H1 (cell line): ENCODE measurements at regions of chr6 and their contacts with region 1.

Region 1: DNA sequence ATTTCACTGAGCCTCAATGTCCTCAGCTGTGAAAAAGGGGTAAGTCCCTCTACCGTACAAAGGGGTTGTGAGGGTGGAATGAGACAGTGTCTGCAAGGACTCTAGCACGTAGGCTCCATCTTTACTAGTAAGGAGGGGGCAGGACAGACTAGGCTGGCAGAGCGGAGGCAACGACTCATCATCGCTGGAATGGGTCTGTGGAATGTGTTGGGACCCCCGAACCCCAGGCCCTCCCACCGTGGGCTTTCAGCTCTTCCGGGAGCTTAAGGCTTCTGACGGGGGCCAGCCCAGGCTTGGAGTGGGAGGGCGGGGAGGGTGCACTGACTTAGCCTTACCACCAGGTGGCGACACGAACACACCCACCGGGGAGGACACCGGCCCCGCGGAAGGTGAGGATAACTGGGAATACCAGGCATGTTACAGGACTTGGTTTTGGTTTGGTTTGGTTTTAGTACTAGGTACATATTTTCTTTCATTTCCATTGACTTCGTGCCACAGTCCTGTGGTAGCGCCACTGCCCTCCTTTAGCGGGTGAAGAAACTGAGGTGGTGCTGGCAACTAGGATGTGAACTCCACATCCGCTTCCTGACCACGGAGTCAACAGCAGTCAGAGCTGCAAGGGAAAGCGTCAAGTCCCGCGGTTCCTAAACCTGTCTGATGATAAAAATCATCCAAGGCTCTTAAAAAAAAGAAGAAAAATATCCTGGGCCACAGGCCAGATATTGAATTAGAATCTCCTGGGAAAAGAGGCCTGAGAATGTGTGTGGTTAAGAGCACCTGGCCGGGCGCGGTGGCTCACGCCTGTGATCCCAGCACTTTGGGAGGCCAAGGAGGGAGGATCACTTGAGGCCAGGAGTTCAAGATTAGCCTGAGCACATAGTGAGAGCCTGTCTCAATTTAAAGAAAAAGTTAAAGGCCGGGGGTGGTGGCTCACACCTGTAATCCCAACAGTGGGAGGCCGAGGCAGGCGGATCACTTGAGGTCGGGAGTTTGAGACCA is 10.3 kb upstream of the TULP1 start:
- DNase-seq: peak; percentile 53 to 91
- H3K4me3 ChIP-seq: no peak overlapping the region
- H3K27ac ChIP-seq: no peak overlapping the region
- H3K4me1 ChIP-seq: peaks cover 0 to 13% (median 8%) of the 10 kb centered on the region in 4 experiments; a peak in 6 of 7 replicates
- H3K27me3 ChIP-seq: 0 out of 7 replicates have a peak, but pooled peaks cover 0 to 2% (median 0%) of the 10 kb centered on the region in 4 experiments
- CTCF ChIP-seq: peak; percentile 94 to 98 (median 94)
- EP300 ChIP-seq: no peak
- POLR2A ChIP-seq: no peak
- RAD21 ChIP-seq: peak; percentile 92 to 96

Region 2: GRCh38 chr6:35402136-35402855 is 120.7 kb before region 1 on chr6:
- CTCF ChIA-PET with region 1: no interaction called
- POLR2A ChIA-PET with region 1: no interaction called
- DNase-seq: no peak
- H3K4me3 ChIP-seq: no peak overlapping the region
- H3K27ac ChIP-seq: no peak overlapping the region
- H3K4me1 ChIP-seq: peaks cover 0 to 8% (median 0%) of the 10 kb centered on the region in 4 experiments; a peak in 2 of 7 replicates
- H3K27me3 ChIP-seq: no peaks in the 10 kb centered on the region
- CTCF ChIP-seq: no peak
- EP300 ChIP-seq: no peak
- POLR2A ChIP-seq: no peak
- RAD21 ChIP-seq: no peak

Region 3: DNA sequence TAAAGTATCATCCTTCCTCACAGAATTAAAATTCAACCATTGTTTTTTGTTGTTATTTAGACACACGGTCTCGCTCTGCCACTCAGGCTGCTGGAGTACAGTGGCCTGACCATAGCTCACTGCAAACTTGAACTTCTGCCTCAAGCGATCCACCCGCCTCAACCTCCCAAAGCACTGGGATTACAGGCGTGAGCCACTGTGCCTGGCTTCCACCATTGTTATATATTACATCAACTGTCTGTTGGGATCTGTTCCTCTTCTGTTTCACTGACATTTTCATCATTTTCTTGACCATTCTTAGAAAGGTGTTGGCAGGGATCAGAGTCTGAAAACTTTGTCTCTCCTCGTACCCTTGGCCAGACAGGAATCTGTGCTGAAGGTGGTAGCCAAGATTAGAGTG is 11.0 kb after region 1 on chr6:
- CTCF ChIA-PET with region 1: interaction called, 521 read pairs
- POLR2A ChIA-PET with region 1: interaction called, 6 read pairs
- DNase-seq: no peak
- H3K4me3 ChIP-seq: no peak overlapping the region
- H3K27ac ChIP-seq: no peak overlapping the region
- H3K4me1 ChIP-seq: peaks cover 2 to 9% (median 6%) of the 10 kb centered on the region in 4 experiments; a peak in 5 of 7 replicates
- H3K27me3 ChIP-seq: no peaks in the 10 kb centered on the region
- CTCF ChIP-seq: no peak
- EP300 ChIP-seq: no peak
- POLR2A ChIP-seq: no peak
- RAD21 ChIP-seq: no peak

Region 4: DNA sequence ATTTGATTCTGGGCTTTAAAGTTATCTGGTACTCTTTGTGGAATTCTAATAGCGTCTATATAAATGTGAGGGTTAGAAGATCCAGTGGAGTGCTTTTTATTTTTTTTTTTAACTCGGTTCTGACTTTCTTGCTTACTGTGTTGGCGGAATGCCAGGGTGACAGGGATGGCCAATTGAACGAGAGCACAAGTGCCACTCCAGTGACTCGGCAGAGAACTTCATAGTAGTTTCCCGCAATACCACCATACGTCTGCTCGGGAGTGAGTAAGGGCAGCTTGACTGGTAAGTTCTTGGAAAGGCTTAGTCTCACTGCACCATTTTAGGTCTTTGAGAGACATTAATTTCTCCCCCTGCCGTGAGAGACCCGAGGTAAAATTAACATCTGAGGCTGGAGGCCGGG is 39.1 kb after region 1 on chr6:
- CTCF ChIA-PET with region 1: interaction called, 521 read pairs
- POLR2A ChIA-PET with region 1: no interaction called
- DNase-seq: no peak
- H3K4me3 ChIP-seq: no peak overlapping the region
- H3K27ac ChIP-seq: no peak overlapping the region
- H3K4me1 ChIP-seq: peaks cover 0 to 4% (median 2%) of the 10 kb centered on the region in 4 experiments; a peak in 4 of 7 replicates
- H3K27me3 ChIP-seq: no peaks in the 10 kb centered on the region
- CTCF ChIP-seq: no peak
- EP300 ChIP-seq: no peak
- POLR2A ChIP-seq: no peak
- RAD21 ChIP-seq: no peak

Region 5: DNA sequence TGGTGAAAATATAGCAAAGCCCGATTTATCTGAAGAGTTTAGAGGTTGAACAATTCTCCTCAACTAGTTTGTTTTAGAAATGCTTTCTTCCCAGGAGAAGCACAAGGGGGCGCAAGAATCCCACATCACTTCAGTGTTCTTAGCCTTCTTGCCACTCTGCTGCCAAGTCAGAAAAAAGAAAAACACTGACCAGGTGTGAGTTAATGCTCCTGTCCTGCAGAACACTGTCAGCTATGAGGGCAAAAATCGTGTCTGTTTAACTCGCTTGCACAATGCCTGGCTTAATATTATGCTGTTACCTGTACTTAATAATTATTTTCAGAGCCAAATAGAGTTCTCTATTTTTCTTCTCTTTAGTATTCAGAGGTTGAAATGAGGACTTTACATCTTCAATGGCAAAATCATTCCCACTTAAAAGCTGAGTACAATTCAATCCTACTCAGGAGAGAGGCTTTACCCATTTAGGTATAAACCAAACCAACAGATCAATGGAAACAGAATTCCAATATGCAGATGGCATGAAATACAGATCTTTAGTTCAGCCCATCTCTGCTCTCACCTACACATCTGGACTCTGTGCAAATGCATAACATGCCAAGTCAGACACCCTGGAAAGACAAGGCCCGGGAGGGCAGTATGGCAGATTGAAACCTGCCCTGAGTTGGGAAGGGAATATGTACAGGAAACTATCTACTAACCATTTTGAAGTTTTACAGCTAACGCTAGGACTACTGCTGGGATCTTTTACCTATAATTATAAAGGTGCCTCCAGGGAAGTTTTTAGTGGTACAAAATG is 61.1 kb after region 1 on chr6:
- CTCF ChIA-PET with region 1: interaction called, 10 read pairs
- POLR2A ChIA-PET with region 1: interaction called, 3 read pairs
- DNase-seq: peak; percentile 23 to 74
- H3K4me3 ChIP-seq: no peak overlapping the region
- H3K27ac ChIP-seq: no peak overlapping the region
- H3K4me1 ChIP-seq: no peaks in the 10 kb centered on the region
- H3K27me3 ChIP-seq: no peaks in the 10 kb centered on the region
- CTCF ChIP-seq: peak in 2 of 3 experiments; percentile 80 to 92; a peak in 3 of 4 replicates
- EP300 ChIP-seq: no peak
- POLR2A ChIP-seq: no peak
- RAD21 ChIP-seq: peak; percentile 94 to 96